ENCODE measurements at regions of chr7 and their contacts with region 1.

Region 1: DNA sequence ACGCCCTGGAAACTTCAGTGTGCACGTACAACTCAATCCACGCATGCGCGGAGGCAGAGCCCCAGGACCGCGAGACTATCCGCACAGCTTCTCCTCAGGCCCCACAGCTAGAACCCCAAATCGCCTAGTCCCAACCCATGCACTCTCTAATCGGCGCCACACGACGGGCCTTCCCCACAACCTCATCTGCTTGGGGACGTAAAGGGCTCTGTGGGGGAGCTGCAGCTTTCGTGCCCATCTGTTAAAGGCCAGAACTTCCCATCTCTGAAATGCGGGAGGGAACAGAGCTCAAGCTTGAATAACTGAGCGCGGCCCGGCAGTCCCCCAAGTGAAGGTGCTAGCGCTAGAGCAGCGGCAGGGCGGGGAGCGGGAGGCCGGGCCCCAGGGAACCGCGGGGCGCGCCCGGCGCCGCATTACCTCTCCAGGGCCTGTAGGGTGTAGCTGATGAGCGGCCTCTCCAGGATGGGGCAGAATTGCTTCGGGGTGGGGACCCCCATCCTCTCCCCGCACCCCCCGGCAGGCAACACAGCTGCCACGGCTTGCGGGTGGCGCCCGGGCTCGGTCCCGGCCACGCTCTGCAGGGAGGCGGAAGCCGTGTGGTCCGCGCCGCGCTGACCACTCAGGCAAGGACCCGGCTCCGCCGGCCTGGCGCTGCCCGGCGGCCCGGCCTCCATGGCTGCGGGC is 547 bp downstream of the CRPPA start:
- DNase-seq: peak; percentile 79
- H3K4me3 ChIP-seq: peak overlapping the region; percentile 51 to 63 (median 54)
- H3K27ac ChIP-seq: peak overlapping the region; percentile 57
- H3K4me1 ChIP-seq: peaks cover 40% of the 10 kb centered on the region
- H3K27me3 ChIP-seq: no peaks in the 10 kb centered on the region
- CTCF ChIP-seq: peak in 1 of 2 donors; percentile 35

Region 2: GRCh38 chr7:16129431-16130116 is 291.2 kb before region 1 on chr7:
- CTCF ChIA-PET with region 1: no interaction called
- dilution Hi-C with region 1: no loop called
- in situ Hi-C with region 1: loop called in 1 of 2 experiments (anchors 25 kb)
- intact Hi-C with region 1: loop called (anchors 5 kb)
- DNase-seq: peak; percentile 73
- H3K4me3 ChIP-seq: no peak overlapping the region
- H3K27ac ChIP-seq: peak overlapping the region; percentile 24
- H3K4me1 ChIP-seq: peaks cover 16% of the 10 kb centered on the region
- H3K27me3 ChIP-seq: no peaks in the 10 kb centered on the region
- CTCF ChIP-seq: no peak

Region 3: DNA sequence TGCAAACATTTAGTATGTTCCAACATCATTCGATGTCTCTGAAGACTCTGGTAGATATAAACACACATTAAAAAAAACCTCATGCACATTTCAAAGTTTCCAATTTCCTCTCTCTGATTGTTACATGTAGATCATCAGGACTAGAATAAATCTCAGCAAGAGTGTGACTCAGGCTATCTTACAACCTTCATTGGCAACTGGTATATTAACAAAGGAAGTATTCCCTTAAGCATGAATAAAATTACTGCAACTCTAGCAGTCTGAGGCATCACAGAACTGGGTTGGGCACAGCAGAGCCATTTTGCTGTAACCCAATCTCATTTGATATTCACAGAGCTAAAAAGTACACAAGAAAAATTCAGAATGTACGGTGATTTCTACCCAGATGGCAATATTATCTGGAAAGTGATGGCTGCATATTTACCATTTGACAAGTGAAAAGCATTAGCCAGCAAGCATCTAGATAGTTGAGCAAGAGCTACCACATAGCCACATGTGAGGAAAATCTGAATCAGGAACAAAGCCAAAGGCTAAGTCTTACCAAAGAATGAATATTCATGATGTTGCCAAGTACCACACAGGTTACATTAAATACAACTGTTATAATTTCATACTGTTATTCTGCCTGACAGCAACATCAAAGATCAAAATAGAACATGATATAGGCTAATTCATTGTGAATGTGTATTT is 231.6 kb before region 1 on chr7:
- CTCF ChIA-PET with region 1: no interaction called
- dilution Hi-C with region 1: no loop called
- in situ Hi-C with region 1: no loop called
- intact Hi-C with region 1: no loop called
- DNase-seq: peak; percentile 3
- H3K4me3 ChIP-seq: no peak overlapping the region
- H3K27ac ChIP-seq: no peak overlapping the region
- H3K4me1 ChIP-seq: no peaks in the 10 kb centered on the region
- H3K27me3 ChIP-seq: no peaks in the 10 kb centered on the region
- CTCF ChIP-seq: no peak

Region 4: DNA sequence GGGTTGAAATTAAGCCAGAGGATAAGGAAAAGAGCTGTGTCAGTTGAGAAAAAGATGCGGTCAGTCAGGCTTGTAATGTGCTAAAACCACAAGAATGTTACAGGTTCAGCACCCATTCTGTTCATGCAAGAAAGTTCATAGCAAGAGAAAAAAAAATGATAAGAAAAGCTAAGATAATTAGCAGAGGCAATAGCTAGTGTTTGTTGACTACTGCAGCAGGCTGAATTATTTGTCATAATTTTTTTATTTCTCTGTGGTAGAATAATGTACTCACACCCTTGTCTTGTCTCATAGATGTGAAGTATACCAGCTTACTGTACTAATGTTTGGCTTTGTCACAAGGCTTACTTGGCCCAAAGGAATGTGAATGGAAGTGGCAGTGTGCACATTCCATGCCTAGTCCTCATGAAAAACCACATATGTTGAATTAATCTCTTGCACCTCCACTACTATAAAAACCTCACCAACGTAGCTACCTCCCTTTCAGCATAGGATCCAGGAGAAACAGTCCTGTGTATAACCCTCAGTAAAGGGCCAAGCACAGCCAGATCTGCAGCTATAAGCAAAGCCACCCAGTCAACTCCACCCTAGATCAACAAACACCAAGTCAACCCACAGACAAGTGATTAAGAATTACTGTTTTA is 74.3 kb before region 1 on chr7:
- CTCF ChIA-PET with region 1: no interaction called
- dilution Hi-C with region 1: no loop called
- in situ Hi-C with region 1: no loop called
- intact Hi-C with region 1: loop called (anchors 10 kb)
- DNase-seq: peak; percentile 80
- H3K4me3 ChIP-seq: no peak overlapping the region
- H3K27ac ChIP-seq: no peak overlapping the region
- H3K4me1 ChIP-seq: peaks cover 22% of the 10 kb centered on the region
- H3K27me3 ChIP-seq: no peaks in the 10 kb centered on the region
- CTCF ChIP-seq: no peak

Region 5: DNA sequence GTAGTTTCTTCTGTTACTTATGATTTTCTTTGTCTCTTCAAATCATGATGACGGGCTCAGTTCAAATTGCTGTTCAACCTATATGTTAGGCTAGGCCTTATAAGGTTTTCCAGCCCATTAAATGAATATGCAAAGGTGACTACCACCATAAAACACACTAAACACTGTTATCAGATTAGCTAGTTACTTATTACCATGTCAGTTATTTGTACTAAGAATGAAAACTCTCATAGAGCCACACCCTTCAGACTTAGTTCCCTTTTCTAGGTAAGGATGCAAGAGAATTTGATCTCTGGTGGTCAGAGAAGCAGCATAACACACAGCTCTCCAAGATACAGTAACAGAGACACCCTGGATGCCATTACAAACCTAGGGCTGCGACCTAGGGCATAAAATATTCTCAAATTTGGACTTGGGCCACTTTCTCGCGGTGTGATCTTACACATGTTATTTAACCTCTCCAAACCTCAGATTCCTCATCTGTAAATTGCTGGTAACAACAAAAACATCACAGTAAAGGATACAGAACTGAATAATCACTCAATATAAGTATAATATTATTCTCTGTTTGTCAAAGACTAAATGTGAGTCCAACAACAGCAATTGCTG is 189.2 kb after region 1 on chr7:
- CTCF ChIA-PET with region 1: no interaction called
- dilution Hi-C with region 1: no loop called
- in situ Hi-C with region 1: no loop called
- intact Hi-C with region 1: no loop called
- DNase-seq: no peak
- H3K4me3 ChIP-seq: no peak overlapping the region
- H3K27ac ChIP-seq: no peak overlapping the region
- H3K4me1 ChIP-seq: no peaks in the 10 kb centered on the region
- H3K27me3 ChIP-seq: no peaks in the 10 kb centered on the region
- CTCF ChIP-seq: no peak

Region 6: DNA sequence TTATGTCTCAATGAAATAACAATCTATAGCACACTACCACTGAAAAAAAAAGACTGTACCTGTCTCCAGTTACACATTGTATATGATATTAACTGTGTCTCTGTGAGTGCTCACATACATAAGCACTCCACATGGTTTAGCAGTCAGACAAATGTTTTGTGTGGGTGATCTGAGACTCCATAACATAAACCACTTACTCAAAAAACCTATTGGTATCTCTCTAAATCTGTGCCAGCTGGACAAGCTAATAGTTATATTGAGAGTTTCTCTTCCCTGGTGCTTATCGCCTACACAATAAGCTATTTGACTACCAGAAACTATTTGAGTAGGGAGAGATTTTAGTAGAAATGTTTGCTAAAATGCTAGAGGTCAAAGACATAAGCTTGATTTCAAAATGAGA is 651.1 kb after region 1 on chr7:
- CTCF ChIA-PET with region 1: no interaction called
- dilution Hi-C with region 1: no loop called
- in situ Hi-C with region 1: no loop called
- intact Hi-C with region 1: no loop called
- DNase-seq: no peak
- H3K4me3 ChIP-seq: no peak overlapping the region
- H3K27ac ChIP-seq: no peak overlapping the region
- H3K4me1 ChIP-seq: peaks cover 16% of the 10 kb centered on the region
- H3K27me3 ChIP-seq: no peaks in the 10 kb centered on the region
- CTCF ChIP-seq: no peak

Measured in mammary epithelial cell (primary cell).